ENCODE measurements at regions of chr11 and their contacts with region 1.

Region 1: GRCh38 chr11:96389720-96390487 is at the starts of genes CCDC82 and JRKL:
- DNase-seq: peak; percentile 95
- H3K4me3 ChIP-seq: peak within 1 kb of the TSS; percentile 82
- H3K27ac ChIP-seq: peak within 1 kb of the TSS; percentile 56
- H3K4me1 ChIP-seq: peaks cover 32% of the 10 kb centered on the region
- CTCF ChIP-seq: no peak
- total RNA-seq, gene CCDC82: 22.2 and 23.0 TPM in 2 replicates
- total RNA-seq, gene JRKL: 4.9 and 6.0 TPM in 2 replicates

Region 2: DNA sequence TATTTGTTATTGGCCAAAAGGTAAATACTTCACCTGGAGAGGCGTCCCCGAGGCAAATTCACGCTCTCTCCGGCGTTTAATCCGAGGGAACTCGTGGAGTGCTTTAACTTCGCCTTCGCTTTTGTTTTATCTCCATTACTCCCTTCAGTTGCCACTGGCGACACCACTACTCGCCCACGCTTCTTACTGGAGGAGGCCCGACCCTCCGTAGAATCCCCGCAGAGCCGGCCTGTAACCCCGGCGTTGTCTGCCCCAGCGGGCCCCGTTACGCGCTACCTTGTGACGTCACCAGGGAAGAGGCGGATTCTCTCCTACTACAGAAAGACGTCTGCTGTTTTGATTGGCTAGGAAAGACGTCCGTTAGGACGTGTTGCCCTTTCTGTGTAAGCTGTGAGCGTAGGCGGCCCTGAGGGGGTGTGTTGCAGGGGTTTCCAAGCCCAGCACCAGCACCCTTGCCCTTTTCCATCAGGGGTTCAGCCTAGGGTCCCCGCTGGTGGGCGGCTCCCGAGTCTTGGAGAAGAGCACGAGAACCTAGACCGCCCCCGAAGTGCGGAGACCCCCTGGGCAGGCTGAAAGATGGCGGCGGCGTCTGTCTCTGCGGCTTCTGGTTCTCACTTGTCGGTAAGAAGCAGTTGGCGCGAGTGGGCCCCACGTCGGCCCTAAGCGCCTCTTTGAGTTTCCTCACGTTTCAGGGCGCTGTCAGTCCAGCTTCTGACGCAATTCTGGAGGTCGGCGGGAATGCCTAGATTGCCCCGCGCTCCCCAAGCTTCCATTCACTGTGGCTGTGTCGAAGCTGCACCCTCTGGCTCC is 599.6 kb before region 1 on chr11 and contains the start of gene CEP57:
- CTCF ChIA-PET with region 1: no interaction called
- POLR2A ChIA-PET with region 1: interaction called, 8 read pairs
- intact Hi-C with region 1: loop called (anchors 5 kb)
- DNase-seq: peak; percentile 98
- H3K4me3 ChIP-seq: peak within 1 kb of the TSS; percentile 83
- H3K27ac ChIP-seq: peak within 1 kb of the TSS; percentile 94
- H3K4me1 ChIP-seq: peaks cover 28% of the 10 kb centered on the region
- CTCF ChIP-seq: no peak
- total RNA-seq, gene CEP57: 53.5 and 57.7 TPM in 2 replicates

Region 3: DNA sequence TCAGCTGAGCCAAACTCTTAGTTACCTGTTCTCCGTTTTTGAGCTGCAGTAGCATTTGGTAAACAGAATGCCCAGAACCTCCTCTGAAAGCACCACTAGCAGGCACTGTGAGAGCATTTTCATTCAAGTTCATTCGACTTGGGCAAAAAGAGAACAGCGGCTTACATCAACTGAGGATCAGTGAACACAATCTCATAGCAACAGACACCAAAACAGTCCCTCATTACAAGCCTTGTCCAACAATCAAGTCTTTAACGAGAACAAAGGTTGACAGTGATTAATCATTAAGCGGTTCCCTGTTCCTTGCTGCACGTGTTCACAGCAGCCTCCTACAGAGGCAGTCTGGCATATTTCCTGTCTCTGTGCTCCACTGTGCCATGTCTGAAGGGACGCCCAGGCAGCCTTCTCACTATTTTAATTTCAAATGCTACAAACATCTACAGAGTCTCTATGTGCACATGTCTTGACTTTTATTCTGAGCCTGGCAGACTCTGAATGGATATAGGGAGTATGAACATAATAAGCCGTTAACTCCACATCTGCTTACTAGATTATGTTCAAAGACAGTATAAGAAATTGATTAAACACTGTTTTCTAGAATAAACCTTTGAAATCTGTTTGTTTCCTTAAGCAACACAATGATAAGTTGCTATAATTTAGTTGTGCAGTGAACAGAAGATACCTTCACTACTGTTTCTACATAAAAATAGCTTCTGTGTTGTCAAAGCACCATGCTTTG is 377.6 kb before region 1 on chr11:
- CTCF ChIA-PET with region 1: no interaction called
- POLR2A ChIA-PET with region 1: interaction called, 9 read pairs
- intact Hi-C with region 1: loop called (anchors 2 kb)
- DNase-seq: peak; percentile 88
- H3K4me3 ChIP-seq: peak overlapping the region; percentile 29
- H3K27ac ChIP-seq: peak overlapping the region; percentile 66
- H3K4me1 ChIP-seq: peaks cover 36% of the 10 kb centered on the region
- CTCF ChIP-seq: peak; percentile 86

Region 4: DNA sequence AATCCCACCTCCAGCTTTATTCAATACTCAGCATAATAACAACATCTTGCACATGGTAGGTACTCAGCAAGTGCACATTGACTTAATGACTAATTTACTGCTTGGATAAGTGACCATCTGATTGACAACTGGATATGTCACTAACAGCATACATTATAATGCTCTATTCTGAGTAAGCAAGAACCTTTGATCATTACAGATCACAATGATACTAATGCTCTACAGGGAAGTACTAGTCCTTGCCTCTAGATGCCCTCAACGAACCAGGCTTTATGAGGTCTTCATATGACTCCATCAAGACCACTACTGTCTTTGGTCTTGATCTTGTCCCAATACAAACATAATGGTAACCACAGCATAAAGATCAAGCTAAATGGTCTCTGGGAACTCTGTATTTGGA is 298.4 kb before region 1 on chr11:
- CTCF ChIA-PET with region 1: no interaction called
- POLR2A ChIA-PET with region 1: no interaction called
- intact Hi-C with region 1: loop called (anchors 1 kb)
- DNase-seq: peak; percentile 64
- H3K4me3 ChIP-seq: no peak overlapping the region
- H3K27ac ChIP-seq: no peak overlapping the region
- H3K4me1 ChIP-seq: no peaks in the 10 kb centered on the region
- CTCF ChIP-seq: peak; percentile 69

Region 5: DNA sequence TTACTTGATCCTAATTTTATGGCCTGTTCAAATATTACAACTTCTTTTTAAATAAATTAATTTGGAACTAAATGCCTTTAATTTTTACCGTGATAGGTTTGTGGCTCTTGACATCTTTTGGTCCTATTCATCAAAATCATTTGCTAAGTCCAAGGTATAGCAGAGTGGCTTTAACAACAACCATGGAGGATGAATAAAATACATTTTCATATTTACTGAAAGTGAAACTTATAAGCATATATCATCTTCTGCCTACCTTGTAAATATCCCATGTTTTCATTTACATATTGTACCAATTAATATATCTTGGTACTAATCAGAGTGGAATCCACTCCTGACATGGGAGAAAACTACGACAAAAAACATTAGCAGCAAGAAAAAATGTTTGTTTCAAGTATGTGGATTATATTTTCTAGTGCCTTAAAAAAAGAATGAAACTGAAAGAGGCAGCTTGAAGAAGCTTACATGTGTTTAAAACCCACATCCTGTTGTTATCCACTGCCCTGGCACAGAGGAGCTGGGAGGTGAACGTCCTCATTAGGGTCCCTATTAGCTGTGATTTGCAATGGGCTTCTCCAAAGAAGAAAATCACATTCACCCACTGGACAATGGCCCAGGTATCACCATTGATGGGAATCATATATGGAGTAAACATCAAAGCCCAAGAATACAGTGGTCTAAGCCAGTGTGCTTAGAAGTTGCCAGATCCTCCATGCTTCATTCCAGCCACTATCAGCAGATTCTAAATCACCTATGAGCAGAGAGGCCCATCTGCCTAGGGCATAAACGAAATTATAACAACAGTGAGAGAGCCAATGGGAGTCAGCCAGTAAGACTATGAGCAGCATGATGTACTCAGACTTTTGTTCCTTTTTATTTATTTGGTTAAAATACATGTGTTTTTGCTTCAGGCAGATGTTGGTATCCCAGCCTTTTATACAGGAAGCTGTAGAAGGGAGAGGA is 131.7 kb before region 1 on chr11:
- CTCF ChIA-PET with region 1: no interaction called
- POLR2A ChIA-PET with region 1: interaction called, 5 read pairs
- intact Hi-C with region 1: loop called (anchors 5 kb)
- DNase-seq: peak; percentile 81
- H3K4me3 ChIP-seq: peak overlapping the region; percentile 43
- H3K27ac ChIP-seq: peak overlapping the region; percentile 81
- H3K4me1 ChIP-seq: peaks cover 71% of the 10 kb centered on the region
- CTCF ChIP-seq: no peak